ENCODE measurements at regions of chr7 and their contacts with region 1.

Region 1: GRCh38 chr7:146090023-146090645 is 26.5 kb upstream of the CNTNAP2 start:
- DNase-seq: peak; percentile 45
- ATAC-seq: no peak
- H3K4me3 ChIP-seq: no peak overlapping the region
- H3K4me3 Mint-ChIP-seq: no peak overlapping the region
- H3K27ac ChIP-seq: no peak overlapping the region
- H3K27ac Mint-ChIP-seq: no peak overlapping the region
- H3K4me1 ChIP-seq: no peaks in the 10 kb centered on the region
- H3K4me1 Mint-ChIP-seq: no peaks in the 10 kb centered on the region
- H3K27me3 ChIP-seq: no peaks in the 10 kb centered on the region
- H3K27me3 Mint-ChIP-seq: no peaks in the 10 kb centered on the region
- CTCF ChIP-seq: peak; percentile 83

Region 2: GRCh38 chr7:144670218-144670617 is 1419.9 kb before region 1 on chr7:
- CTCF ChIA-PET with region 1: interaction called, 10 read pairs
- POLR2A ChIA-PET with region 1: no interaction called
- intact Hi-C with region 1: loop called (anchors 10 kb)
- DNase-seq: peak; percentile 7
- ATAC-seq: no peak
- H3K4me3 ChIP-seq: no peak overlapping the region
- H3K4me3 Mint-ChIP-seq: no peak overlapping the region
- H3K27ac ChIP-seq: no peak overlapping the region
- H3K27ac Mint-ChIP-seq: no peak overlapping the region
- H3K4me1 ChIP-seq: no peaks in the 10 kb centered on the region
- H3K4me1 Mint-ChIP-seq: no peaks in the 10 kb centered on the region
- H3K27me3 ChIP-seq: no peaks in the 10 kb centered on the region
- H3K27me3 Mint-ChIP-seq: no peaks in the 10 kb centered on the region
- CTCF ChIP-seq: peak; percentile 46

Region 3: DNA sequence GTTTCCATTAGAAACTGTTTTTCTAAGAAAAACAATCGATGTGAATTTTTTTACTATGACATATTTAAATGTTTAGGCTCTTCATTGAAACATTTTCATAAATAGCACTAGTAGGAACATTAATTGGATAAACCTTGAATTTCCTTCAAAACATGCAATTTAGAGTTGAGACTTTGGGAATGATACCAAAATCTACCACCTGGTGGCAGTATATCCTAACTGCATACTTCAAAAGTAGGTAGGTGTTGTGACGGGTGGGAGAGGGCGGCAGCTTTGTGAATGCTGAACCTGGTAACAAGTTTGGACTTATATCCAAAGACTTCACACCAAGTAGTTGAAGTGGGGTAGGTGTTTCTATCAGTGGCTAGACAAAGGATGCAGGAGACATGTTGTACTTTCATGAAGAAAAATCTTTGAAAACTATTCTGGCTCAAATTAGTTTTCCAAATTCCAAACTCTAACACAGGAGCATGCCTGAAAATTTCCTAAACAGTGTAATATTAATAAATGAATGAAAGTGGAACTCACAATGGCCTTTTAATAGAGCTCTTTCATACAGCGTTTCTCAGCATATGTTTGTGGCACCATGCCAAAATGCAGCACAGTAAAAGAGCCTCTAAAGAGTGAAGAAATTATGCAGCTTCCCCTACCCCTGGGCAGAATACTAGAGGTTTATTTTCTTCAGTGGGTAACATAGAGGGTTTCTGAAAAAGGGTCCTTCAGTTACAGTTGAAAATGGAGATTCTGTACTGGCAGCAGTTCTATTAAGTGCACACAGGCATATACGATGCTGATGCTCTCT is 1053.3 kb before region 1 on chr7:
- CTCF ChIA-PET with region 1: interaction called, 18 read pairs
- POLR2A ChIA-PET with region 1: no interaction called
- intact Hi-C with region 1: no loop called
- DNase-seq: peak; percentile 56
- ATAC-seq: peak; percentile 57
- H3K4me3 ChIP-seq: no peak overlapping the region
- H3K4me3 Mint-ChIP-seq: no peak overlapping the region
- H3K27ac ChIP-seq: no peak overlapping the region
- H3K27ac Mint-ChIP-seq: no peak overlapping the region
- H3K4me1 ChIP-seq: no peaks in the 10 kb centered on the region
- H3K4me1 Mint-ChIP-seq: peaks cover 1% of the 10 kb centered on the region
- H3K27me3 ChIP-seq: no peaks in the 10 kb centered on the region
- H3K27me3 Mint-ChIP-seq: peaks cover 8% of the 10 kb centered on the region
- CTCF ChIP-seq: peak; percentile 93

Region 4: GRCh38 chr7:146022776-146023175 is 67.4 kb before region 1 on chr7:
- CTCF ChIA-PET with region 1: no interaction called
- POLR2A ChIA-PET with region 1: no interaction called
- intact Hi-C with region 1: no loop called
- DNase-seq: no peak
- ATAC-seq: no peak
- H3K4me3 ChIP-seq: no peak overlapping the region
- H3K4me3 Mint-ChIP-seq: no peak overlapping the region
- H3K27ac ChIP-seq: no peak overlapping the region
- H3K27ac Mint-ChIP-seq: no peak overlapping the region
- H3K4me1 ChIP-seq: no peaks in the 10 kb centered on the region
- H3K4me1 Mint-ChIP-seq: no peaks in the 10 kb centered on the region
- H3K27me3 ChIP-seq: no peaks in the 10 kb centered on the region
- H3K27me3 Mint-ChIP-seq: no peaks in the 10 kb centered on the region
- CTCF ChIP-seq: no peak

Region 5: DNA sequence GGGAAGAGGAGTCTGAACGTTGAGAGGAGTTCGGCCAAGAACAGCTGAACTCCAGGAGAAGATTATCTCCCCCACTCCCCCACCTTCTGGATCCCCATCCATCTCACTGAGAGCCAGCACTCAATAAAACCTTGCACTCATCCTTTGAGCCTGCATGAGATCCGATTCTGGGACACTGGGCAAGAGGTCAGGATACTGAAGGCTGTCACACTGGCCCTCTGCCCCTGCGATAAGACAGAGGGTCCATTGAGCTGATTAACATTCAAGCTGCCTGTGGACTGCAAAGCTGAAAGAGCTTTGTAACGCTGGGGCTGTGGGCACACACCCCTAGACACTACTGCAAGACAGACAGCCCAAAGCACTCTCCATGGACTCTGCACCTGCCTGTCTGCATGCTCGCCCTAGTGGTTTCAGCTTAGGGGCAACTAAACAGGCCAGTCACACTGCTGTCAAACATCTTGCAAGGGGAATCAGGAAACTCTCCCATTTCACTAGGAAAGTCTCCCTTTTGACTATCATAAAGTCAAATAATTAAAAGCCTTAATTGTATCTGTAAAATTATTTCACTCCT is 15.9 kb before region 1 on chr7:
- CTCF ChIA-PET with region 1: interaction called, 11 read pairs
- POLR2A ChIA-PET with region 1: no interaction called
- intact Hi-C with region 1: no loop called
- DNase-seq: no peak
- ATAC-seq: no peak
- H3K4me3 ChIP-seq: no peak overlapping the region
- H3K4me3 Mint-ChIP-seq: no peak overlapping the region
- H3K27ac ChIP-seq: no peak overlapping the region
- H3K27ac Mint-ChIP-seq: no peak overlapping the region
- H3K4me1 ChIP-seq: no peaks in the 10 kb centered on the region
- H3K4me1 Mint-ChIP-seq: no peaks in the 10 kb centered on the region
- H3K27me3 ChIP-seq: no peaks in the 10 kb centered on the region
- H3K27me3 Mint-ChIP-seq: no peaks in the 10 kb centered on the region
- CTCF ChIP-seq: no peak

Region 6: DNA sequence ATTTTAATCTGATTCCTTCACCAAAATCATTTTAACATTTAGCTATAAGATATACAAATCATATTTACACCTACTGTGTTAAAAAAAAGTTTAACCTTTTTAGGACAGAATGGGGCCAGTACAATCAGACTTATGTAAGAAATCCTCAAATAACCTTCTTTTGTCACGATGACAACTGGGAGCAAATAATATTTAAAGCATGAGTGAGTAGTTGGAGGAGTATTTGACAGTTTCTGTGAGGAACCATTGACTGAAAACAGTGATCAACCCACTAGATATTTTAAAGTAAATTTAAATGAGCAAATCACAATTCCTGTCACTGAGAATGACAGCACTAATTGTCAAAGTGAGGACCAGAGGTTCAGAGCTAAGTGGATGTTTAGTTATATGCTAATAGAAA is 315.6 kb after region 1 on chr7:
- CTCF ChIA-PET with region 1: no interaction called
- POLR2A ChIA-PET with region 1: no interaction called
- intact Hi-C with region 1: no loop called
- DNase-seq: no peak
- ATAC-seq: no peak
- H3K4me3 ChIP-seq: no peak overlapping the region
- H3K4me3 Mint-ChIP-seq: no peak overlapping the region
- H3K27ac ChIP-seq: no peak overlapping the region
- H3K27ac Mint-ChIP-seq: no peak overlapping the region
- H3K4me1 ChIP-seq: no peaks in the 10 kb centered on the region
- H3K4me1 Mint-ChIP-seq: no peaks in the 10 kb centered on the region
- H3K27me3 ChIP-seq: no peaks in the 10 kb centered on the region
- H3K27me3 Mint-ChIP-seq: no peaks in the 10 kb centered on the region
- CTCF ChIP-seq: no peak

Region 7: GRCh38 chr7:146865696-146866095 is 775.6 kb after region 1 on chr7:
- CTCF ChIA-PET with region 1: no interaction called
- POLR2A ChIA-PET with region 1: no interaction called
- intact Hi-C with region 1: no loop called
- DNase-seq: no peak
- ATAC-seq: no peak
- H3K4me3 ChIP-seq: no peak overlapping the region
- H3K4me3 Mint-ChIP-seq: no peak overlapping the region
- H3K27ac ChIP-seq: no peak overlapping the region
- H3K27ac Mint-ChIP-seq: no peak overlapping the region
- H3K4me1 ChIP-seq: no peaks in the 10 kb centered on the region
- H3K4me1 Mint-ChIP-seq: no peaks in the 10 kb centered on the region
- H3K27me3 ChIP-seq: no peaks in the 10 kb centered on the region
- H3K27me3 Mint-ChIP-seq: no peaks in the 10 kb centered on the region
- CTCF ChIP-seq: no peak